ENCODE measurements at regions of chr12 and their contacts with region 1.

Region 1: GRCh38 chr12:112012775-112013600 is at the starts of genes ERP29 and TMEM116:
- DNase-seq: peak; percentile 97 to 100 (median 99)
- H3K4me3 ChIP-seq: peak within 1 kb of the TSS; percentile 91 to 99 (median 94)
- H3K4me3 Mint-ChIP-seq: peak within 1 kb of the TSS; percentile 85 to 97
- H3K27ac ChIP-seq: peak within 1 kb of the TSS; percentile 89 to 92
- H3K27ac Mint-ChIP-seq: peak within 1 kb of the TSS; percentile 89 to 97 (median 96)
- H3K4me1 ChIP-seq: peaks cover 46 to 52% of the 10 kb centered on the region in 2 donors
- H3K4me1 Mint-ChIP-seq: peaks cover 44% of the 10 kb centered on the region
- H3K27me3 ChIP-seq: no peaks in the 10 kb centered on the region
- H3K27me3 Mint-ChIP-seq: peaks cover 0 to 2% (median 0%) of the 10 kb centered on the region in 3 donors
- CTCF ChIP-seq: peak; percentile 62
- polyA plus RNA-seq, gene ERP29: 158 to 207 (median 170) TPM
- polyA plus RNA-seq, gene TMEM116: 5.6 to 11.6 (median 8.3) TPM

Region 2: DNA sequence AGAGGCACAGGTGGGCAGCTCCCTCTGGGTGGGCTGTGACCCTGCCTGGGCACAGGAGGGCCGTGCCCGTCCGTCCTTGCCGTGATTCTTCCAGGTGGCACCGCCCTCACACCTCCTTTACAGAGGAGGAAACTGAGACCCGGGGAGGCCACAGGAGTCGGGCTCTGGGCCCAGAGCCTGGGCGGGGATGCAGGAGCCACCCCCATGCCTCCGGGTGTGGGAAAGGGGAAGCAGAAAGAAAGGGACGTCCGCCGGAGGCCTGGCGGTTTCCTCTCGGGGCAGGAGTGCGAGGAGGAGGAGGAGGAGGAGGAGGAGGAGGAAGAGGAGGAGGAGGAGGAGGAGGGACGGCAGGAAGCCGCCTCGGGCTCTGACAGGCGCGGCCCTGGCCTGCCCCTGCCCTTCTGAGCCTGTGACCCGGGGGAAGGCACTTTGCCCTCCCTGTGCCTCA is 584.2 kb before region 1 on chr12:
- intact Hi-C with region 1: no loop called
- DNase-seq: peak; percentile 69 to 85 (median 82)
- H3K4me3 ChIP-seq: peak overlapping the region in 2 of 3 experiments; percentile 13 to 56
- H3K4me3 Mint-ChIP-seq: peak overlapping the region; percentile 66 to 69
- H3K27ac ChIP-seq: peak overlapping the region; percentile 80 to 90
- H3K27ac Mint-ChIP-seq: peak overlapping the region; percentile 88 to 93 (median 90)
- H3K4me1 ChIP-seq: peaks cover 98 to 100% of the 10 kb centered on the region in 2 donors
- H3K4me1 Mint-ChIP-seq: peaks cover 96% of the 10 kb centered on the region
- H3K27me3 ChIP-seq: no peaks in the 10 kb centered on the region
- H3K27me3 Mint-ChIP-seq: peaks cover 0 to 2% (median 0%) of the 10 kb centered on the region in 3 donors
- CTCF ChIP-seq: no peak

Region 3: DNA sequence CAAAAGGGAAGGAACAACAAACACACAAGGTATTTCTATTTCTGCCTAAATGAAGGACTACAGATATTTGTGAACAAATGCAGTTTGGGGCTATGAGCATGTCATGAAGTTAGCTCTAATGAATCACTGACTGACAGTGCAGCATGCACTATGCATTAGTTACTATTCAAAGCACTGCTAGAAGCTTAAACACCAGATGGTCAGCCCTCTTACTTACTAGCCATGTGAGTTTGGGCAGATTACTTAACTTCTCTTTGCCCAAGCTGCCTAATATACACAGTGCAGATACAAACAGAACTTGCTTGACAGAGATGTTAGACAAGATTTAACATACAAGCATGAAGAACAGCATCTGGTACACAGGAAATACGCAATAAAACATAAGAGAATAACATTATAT is 509.9 kb before region 1 on chr12:
- intact Hi-C with region 1: no loop called
- DNase-seq: no peak
- H3K4me3 ChIP-seq: no peak overlapping the region
- H3K4me3 Mint-ChIP-seq: no peak overlapping the region
- H3K27ac ChIP-seq: no peak overlapping the region
- H3K27ac Mint-ChIP-seq: no peak overlapping the region
- H3K4me1 ChIP-seq: no peaks in the 10 kb centered on the region
- H3K4me1 Mint-ChIP-seq: no peaks in the 10 kb centered on the region
- H3K27me3 ChIP-seq: no peaks in the 10 kb centered on the region
- H3K27me3 Mint-ChIP-seq: peaks cover 0 to 3% (median 1%) of the 10 kb centered on the region in 3 donors
- CTCF ChIP-seq: no peak

Region 4: GRCh38 chr12:111942557-111942956 is 70.4 kb before region 1 on chr12:
- intact Hi-C with region 1: loop called (anchors 10 kb)
- DNase-seq: no peak
- H3K4me3 ChIP-seq: no peak overlapping the region
- H3K4me3 Mint-ChIP-seq: no peak overlapping the region
- H3K27ac ChIP-seq: no peak overlapping the region
- H3K27ac Mint-ChIP-seq: no peak overlapping the region
- H3K4me1 ChIP-seq: no peaks in the 10 kb centered on the region
- H3K4me1 Mint-ChIP-seq: peaks cover 3% of the 10 kb centered on the region
- H3K27me3 ChIP-seq: no peaks in the 10 kb centered on the region
- H3K27me3 Mint-ChIP-seq: no peaks in the 10 kb centered on the region
- CTCF ChIP-seq: no peak

Region 5: GRCh38 chr12:112116232-112117060 is 103.5 kb after region 1 on chr12:
- intact Hi-C with region 1: loop called in 1 of 2 experiments (anchors 10 kb)
- DNase-seq: peak; percentile 55 to 77 (median 73)
- H3K4me3 ChIP-seq: peak overlapping the region in 2 of 3 experiments; percentile 16 to 63
- H3K4me3 Mint-ChIP-seq: peak overlapping the region; percentile 58 to 89
- H3K27ac ChIP-seq: peak overlapping the region; percentile 80 to 86
- H3K27ac Mint-ChIP-seq: peak overlapping the region; percentile 87 to 97 (median 93)
- H3K4me1 ChIP-seq: peaks cover 32 to 45% of the 10 kb centered on the region in 2 donors
- H3K4me1 Mint-ChIP-seq: peaks cover 42% of the 10 kb centered on the region
- H3K27me3 ChIP-seq: no peaks in the 10 kb centered on the region
- H3K27me3 Mint-ChIP-seq: peaks cover 0 to 3% (median 0%) of the 10 kb centered on the region in 3 donors
- CTCF ChIP-seq: no peak

Measured in CD14-positive monocyte (primary cell).